Ascending aorta (tissue), 2 donors: ENCODE measurements at regions of chr4 and their contacts with region 1.

Region 1: GRCh38 chr4:75673027-75673958 is at the start of gene G3BP2:
- DNase-seq: peak; percentile 94 to 99
- H3K4me3 ChIP-seq: peak within 1 kb of the TSS; percentile 92 to 99
- H3K27ac ChIP-seq: peak within 1 kb of the TSS; percentile 99 to 100
- H3K4me1 ChIP-seq: peaks cover 3 to 24% of the 10 kb centered on the region in 2 donors
- H3K27me3 ChIP-seq: no peaks in the 10 kb centered on the region
- CTCF ChIP-seq: no peak
- total RNA-seq, gene G3BP2: 88.9 TPM

Region 2: GRCh38 chr4:75630174-75630936 is 42.9 kb before region 1 on chr4 and contains the start of gene CDKL2:
- intact Hi-C with region 1: loop called (anchors 2 kb)
- DNase-seq: peak; percentile 53 to 94
- H3K4me3 ChIP-seq: peak within 1 kb of the TSS; percentile 74 to 77
- H3K27ac ChIP-seq: peak within 1 kb of the TSS; percentile 36 to 57
- H3K4me1 ChIP-seq: no peaks in the 10 kb centered on the region
- H3K27me3 ChIP-seq: no peaks in the 10 kb centered on the region
- CTCF ChIP-seq: no peak
- total RNA-seq, gene CDKL2: not detected

Region 3: DNA sequence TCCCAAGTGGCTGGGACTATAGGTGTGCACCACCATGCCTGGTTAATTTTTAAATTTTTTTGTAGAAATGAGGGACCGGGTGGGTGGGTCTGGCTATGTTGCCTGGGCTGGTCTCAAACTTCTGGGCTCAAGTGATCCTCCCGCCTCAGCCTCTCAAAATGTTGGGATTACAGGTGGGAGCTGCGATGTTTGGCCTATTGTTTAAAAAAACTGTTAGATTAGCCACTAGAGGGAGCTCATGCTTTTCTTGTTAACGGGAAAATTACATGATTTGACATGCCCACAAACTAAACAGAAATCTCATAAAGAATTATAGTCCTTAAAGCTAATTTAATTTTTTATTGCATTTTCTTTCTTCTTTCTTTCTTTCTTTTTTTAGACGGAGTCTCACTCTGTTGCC is 322.4 kb after region 1 on chr4:
- intact Hi-C with region 1: loop called (anchors 10 kb)
- DNase-seq: no peak
- H3K4me3 ChIP-seq: no peak overlapping the region
- H3K27ac ChIP-seq: no peak overlapping the region
- H3K4me1 ChIP-seq: no peaks in the 10 kb centered on the region
- H3K27me3 ChIP-seq: no peaks in the 10 kb centered on the region
- CTCF ChIP-seq: peak; percentile 37 to 72 (median 54)